ENCODE measurements at regions of chr16 and their contacts with region 1.

Region 1: DNA sequence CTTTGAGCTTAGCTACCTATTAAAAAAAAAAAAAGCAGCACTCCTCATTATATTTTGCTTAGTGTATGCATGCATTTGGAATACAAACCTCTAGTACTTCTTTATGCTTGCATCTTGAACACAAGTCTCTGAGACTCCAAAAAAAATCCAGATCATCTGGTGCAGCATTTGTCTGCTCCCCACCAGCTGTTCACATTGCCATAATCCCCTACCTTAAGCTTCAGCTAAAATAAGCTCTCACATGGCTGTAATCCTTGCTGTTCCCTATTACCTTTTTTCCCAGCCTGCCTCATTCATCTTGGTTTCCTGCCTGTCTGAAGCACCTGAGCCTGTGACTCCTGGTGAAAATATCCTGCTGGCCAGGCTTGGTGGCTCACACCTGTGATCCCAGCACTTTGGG is 7.5 kb upstream of the NFATC2IP start:
- DNase-seq: no peak
- H3K4me3 ChIP-seq: no peak overlapping the region
- H3K27me3 ChIP-seq: no peaks in the 10 kb centered on the region; the same call in 1 of the 2 replicates
- CTCF ChIP-seq: no peak

Region 2: DNA sequence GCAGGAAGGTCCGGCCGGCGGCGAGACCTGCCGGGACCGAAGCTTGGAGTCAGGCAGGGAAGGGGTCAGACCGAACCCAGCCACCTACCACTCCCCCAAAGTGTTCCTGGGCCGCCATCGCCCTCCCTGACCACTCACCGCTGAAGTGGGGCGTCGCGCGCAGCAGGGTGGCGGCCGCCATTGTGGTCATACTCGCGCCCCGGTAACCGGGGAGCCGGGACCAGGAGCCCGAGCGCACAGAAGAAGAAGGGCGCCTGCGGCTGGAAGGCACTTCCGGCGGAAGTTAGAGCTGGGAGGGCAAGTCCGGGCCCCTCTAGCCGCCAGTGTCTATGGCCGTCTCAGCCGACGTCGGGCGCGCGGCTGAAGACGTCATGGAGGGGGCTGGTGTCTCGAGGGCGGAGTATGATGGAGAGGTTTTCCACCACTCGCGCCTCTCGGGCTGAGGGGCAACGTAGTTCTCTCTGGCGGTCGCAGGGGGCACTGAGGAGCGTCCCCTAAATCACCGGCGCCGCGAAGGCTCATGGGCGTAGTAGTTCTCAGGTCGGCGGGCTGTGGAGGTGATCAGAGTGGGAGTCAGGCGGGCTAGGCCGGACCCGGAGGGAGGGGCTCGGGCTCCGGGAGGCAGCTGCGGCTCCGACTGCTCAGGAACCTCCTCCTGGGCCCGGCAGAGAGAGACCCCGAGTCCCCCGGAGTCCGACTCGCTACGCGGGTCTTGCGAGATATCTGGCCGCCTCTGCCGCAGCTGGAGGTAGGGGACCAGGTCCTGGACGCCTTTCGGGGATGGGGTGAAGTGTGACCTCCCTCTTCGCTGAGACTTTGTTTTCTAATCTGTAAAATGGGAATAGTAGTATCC is 97.0 kb before region 1 on chr16 and contains the start of gene TUFM:
- CTCF ChIA-PET with region 1: interaction called, 17 read pairs
- POLR2A ChIA-PET with region 1: no interaction called
- DNase-seq: peak; percentile 86
- H3K4me3 ChIP-seq: peak within 1 kb of the TSS; percentile 90
- H3K27me3 ChIP-seq: no peaks in the 10 kb centered on the region
- CTCF ChIP-seq: peak; percentile 78
- polyA plus RNA-seq, gene TUFM: 77.2 and 118 TPM in 2 replicates

Region 3: GRCh38 chr16:28924732-28925385 is 18.4 kb before region 1 on chr16 and contains the start of gene RABEP2:
- CTCF ChIA-PET with region 1: interaction called, 17 read pairs
- POLR2A ChIA-PET with region 1: no interaction called
- DNase-seq: peak; percentile 29
- H3K4me3 ChIP-seq: peak within 1 kb of the TSS; percentile 92
- H3K27me3 ChIP-seq: no peaks in the 10 kb centered on the region
- CTCF ChIP-seq: no peak
- polyA plus RNA-seq, gene RABEP2: 14.5 and 20.4 TPM in 2 replicates